Breast epithelium (tissue), 4 donors: ENCODE measurements at regions of chr20 and their contacts with region 1.

Region 1: DNA sequence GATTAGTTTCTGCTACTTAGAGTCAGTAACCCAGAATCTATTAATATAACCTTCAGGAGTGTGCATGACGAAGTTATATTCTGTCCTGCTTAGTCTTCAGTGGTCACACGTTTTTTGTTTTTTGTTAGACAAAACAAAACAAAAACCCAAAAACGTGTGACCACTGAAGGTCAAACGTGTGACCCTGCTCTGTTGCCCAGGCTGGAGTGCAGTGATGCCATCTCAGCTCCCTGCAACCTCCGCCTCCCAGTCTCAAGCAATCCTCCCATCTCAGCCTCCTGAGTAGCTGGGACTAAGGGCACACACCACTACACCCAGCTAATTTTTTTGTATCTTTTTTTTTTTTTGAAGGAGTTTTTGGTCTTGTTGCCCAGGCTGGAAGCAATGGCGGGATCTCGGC is 142.4 kb downstream of the BCAS1 start:
- DNase-seq: no peak
- H3K4me3 ChIP-seq: no peak overlapping the region
- H3K27ac ChIP-seq: no peak overlapping the region
- H3K4me1 ChIP-seq: no peaks in the 10 kb centered on the region
- H3K27me3 ChIP-seq: no peaks in the 10 kb centered on the region
- CTCF ChIP-seq: no peak
- POLR2A ChIP-seq: no peak

Region 2: DNA sequence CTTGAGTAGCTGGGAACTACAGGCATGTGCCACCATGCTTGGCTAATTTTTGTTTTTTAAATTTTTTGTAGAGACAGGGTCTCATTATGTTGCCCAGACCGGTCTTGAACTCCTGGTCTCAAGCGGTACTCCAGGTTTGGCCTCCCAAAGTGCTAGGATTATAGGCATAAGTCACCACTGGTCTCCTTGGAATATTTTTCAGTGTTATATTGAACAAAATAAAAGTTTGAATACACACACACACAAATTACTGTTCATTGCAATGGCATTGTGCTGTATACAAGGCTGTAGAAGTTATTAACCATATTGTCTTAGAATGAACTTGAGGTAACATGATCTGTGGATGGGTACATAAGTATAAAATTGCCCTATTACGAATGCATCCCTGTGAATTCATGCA is 23.7 kb before region 1 on chr20:
- intact Hi-C with region 1: loop called (anchors 1 kb)
- DNase-seq: no peak
- H3K4me3 ChIP-seq: no peak overlapping the region
- H3K27ac ChIP-seq: no peak overlapping the region
- H3K4me1 ChIP-seq: peaks cover 5 to 7% of the 10 kb centered on the region in 2 donors
- H3K27me3 ChIP-seq: no peaks in the 10 kb centered on the region
- CTCF ChIP-seq: no peak
- POLR2A ChIP-seq: no peak